PC-3 (cell line): ENCODE measurements at regions of chr9 and their contacts with region 1.

Region 1: DNA sequence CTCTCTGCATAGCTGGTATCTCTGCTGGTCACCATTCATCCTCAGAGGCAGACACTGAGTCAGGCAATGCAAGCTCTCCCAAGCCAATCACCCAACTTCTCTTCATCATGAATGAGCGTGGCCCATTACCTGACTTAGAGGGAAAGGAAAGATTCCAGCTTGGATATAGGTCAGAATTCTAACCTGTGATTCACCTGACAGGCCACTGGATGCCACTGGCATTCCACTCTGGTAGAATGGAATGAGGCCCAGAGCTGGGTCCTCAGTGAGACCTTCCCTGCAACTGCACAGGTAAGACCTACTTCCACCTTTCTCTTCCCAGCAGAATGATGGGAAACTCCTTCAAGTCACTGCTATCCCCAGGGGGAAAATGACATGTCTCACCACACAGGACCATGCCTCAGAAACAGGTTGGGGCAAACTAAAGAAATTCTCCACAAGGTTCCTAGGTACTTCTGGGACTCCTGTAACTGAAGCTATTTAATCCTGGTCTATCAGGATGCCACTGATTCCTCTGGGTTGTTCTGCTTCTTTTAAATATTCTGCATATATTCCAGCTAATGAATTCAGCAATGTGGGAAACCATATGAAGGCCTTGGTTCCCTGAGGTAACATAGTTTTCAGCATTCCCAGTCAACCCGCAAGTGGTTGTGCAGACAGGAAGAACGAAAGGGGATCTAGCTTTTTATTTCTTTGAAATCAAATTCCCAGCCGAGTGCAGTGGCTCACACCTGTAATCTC is 62.0 kb downstream of the SUSD1 start:
- DNase-seq: peak; percentile 84
- ATAC-seq: peak; percentile 82
- H3K4me3 ChIP-seq: peak overlapping the region; percentile 33; the same call in 1 of the 2 replicates
- H3K27ac ChIP-seq: peak overlapping the region; percentile 100
- H3K4me1 ChIP-seq: peaks cover 43% of the 10 kb centered on the region
- H3K27me3 ChIP-seq: no peaks in the 10 kb centered on the region
- CTCF ChIP-seq: peak; percentile 73

Region 2: DNA sequence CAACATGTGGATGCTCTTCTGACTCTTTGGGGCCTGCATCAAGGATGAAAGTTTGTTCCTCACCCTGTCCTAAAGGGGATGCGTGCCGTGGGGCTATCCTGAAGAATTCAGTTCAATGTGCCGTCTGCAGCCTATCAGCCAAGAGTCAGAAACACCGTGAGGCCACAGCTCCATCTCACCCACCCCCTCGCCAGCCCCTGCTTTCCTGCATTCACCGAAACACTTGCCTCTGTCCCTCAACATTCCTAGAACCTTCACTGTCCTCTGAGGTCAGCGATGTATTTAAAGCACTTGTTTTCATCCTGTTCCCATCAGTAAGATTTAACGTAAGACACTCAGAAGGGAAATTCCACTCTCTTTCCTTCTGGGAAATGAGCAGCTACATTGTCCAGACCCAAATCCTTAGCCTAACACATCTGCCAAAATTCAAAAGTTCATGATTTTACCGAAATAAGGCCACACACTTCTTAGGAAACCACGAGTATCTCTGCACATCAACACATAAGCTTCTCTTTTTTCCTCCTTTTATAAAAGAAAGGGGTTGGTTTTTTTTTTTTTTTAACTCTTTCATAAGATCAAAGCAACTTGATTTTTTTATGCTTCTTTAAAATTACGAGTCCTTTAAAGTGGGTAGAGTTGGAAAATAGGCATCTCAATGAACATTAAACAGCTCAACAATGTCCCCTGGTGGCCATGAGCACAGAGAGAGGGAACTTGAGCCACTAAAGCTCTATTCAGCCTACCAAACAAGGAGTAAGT is 38.7 kb before region 1 on chr9:
- CTCF ChIA-PET with region 1: no interaction called
- POLR2A ChIA-PET with region 1: no interaction called
- intact Hi-C with region 1: no loop called
- DNase-seq: peak; percentile 86
- ATAC-seq: peak; percentile 78
- H3K4me3 ChIP-seq: no peak overlapping the region
- H3K27ac ChIP-seq: peak overlapping the region; percentile 81
- H3K4me1 ChIP-seq: peaks cover 28% of the 10 kb centered on the region
- H3K27me3 ChIP-seq: no peaks in the 10 kb centered on the region
- CTCF ChIP-seq: peak; percentile 93

Region 3: GRCh38 chr9:112145886-112146285 is 32.8 kb after region 1 on chr9:
- CTCF ChIA-PET with region 1: no interaction called
- POLR2A ChIA-PET with region 1: interaction called, 4 read pairs
- intact Hi-C with region 1: loop called (anchors 2 kb)
- DNase-seq: peak; percentile 91
- ATAC-seq: peak; percentile 57
- H3K4me3 ChIP-seq: no peak overlapping the region
- H3K27ac ChIP-seq: peak overlapping the region; percentile 96
- H3K4me1 ChIP-seq: peaks cover 38% of the 10 kb centered on the region
- H3K27me3 ChIP-seq: no peaks in the 10 kb centered on the region
- CTCF ChIP-seq: no peak

Region 4: DNA sequence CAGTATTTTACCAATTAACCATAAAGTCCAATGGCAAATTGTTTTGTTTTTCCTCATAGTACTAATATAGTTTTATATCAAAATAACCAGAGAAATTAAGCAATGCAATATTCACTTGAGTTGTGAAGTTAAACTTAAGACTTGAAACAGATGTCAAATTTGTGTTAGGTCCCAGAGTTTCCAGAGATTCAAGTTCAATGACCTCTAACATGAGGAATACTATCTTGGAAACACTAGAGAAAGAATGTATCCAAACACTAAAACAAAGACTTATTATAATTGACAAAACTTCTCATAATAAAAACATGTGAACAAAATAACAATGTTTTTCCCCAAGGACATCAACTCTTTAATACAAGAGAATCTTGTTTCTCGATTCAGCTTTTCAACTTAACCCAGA is 44.0 kb after region 1 on chr9:
- CTCF ChIA-PET with region 1: no interaction called
- POLR2A ChIA-PET with region 1: interaction called, 16 read pairs
- intact Hi-C with region 1: no loop called
- DNase-seq: no peak
- ATAC-seq: no peak
- H3K4me3 ChIP-seq: no peak overlapping the region
- H3K27ac ChIP-seq: no peak overlapping the region
- H3K4me1 ChIP-seq: peaks cover under 1% of the 10 kb centered on the region; the same call in 1 of the 2 replicates
- H3K27me3 ChIP-seq: no peaks in the 10 kb centered on the region
- CTCF ChIP-seq: no peak

Region 5: DNA sequence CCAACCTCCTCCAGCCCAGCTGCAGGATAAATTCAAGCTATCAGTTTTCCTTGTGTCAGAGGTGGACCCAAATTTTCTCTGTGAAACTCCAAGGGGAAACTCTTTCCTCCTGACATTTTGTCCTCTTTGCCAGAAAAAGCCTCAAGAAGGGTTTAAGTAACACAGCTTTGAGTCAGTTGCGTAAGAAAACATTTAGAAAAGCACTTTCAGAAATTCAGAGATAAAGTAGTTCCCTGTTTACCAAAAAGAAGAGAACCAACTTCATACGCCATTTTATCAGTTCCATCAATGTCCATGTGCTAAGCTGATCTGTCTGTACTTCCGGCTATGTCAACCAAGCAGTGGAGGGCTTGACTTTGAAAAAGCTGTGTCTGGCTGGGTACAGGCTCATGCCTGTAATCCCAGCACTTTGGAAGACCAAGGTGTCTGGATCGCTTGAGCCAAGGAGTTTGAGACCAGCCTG is 81.9 kb after region 1 on chr9:
- CTCF ChIA-PET with region 1: no interaction called
- POLR2A ChIA-PET with region 1: no interaction called
- intact Hi-C with region 1: no loop called
- DNase-seq: no peak
- ATAC-seq: no peak
- H3K4me3 ChIP-seq: no peak overlapping the region
- H3K27ac ChIP-seq: no peak overlapping the region
- H3K4me1 ChIP-seq: no peaks in the 10 kb centered on the region
- H3K27me3 ChIP-seq: no peaks in the 10 kb centered on the region
- CTCF ChIP-seq: no peak

Region 6: GRCh38 chr9:112401175-112401815 is 288.2 kb after region 1 on chr9:
- CTCF ChIA-PET with region 1: no interaction called
- POLR2A ChIA-PET with region 1: no interaction called
- intact Hi-C with region 1: no loop called
- DNase-seq: no peak
- ATAC-seq: no peak
- H3K4me3 ChIP-seq: no peak overlapping the region
- H3K27ac ChIP-seq: no peak overlapping the region
- H3K4me1 ChIP-seq: no peaks in the 10 kb centered on the region
- H3K27me3 ChIP-seq: no peaks in the 10 kb centered on the region
- CTCF ChIP-seq: no peak